OCI-LY7 (cell line): ENCODE measurements at regions of chr17 and their contacts with region 1.

Region 1: DNA sequence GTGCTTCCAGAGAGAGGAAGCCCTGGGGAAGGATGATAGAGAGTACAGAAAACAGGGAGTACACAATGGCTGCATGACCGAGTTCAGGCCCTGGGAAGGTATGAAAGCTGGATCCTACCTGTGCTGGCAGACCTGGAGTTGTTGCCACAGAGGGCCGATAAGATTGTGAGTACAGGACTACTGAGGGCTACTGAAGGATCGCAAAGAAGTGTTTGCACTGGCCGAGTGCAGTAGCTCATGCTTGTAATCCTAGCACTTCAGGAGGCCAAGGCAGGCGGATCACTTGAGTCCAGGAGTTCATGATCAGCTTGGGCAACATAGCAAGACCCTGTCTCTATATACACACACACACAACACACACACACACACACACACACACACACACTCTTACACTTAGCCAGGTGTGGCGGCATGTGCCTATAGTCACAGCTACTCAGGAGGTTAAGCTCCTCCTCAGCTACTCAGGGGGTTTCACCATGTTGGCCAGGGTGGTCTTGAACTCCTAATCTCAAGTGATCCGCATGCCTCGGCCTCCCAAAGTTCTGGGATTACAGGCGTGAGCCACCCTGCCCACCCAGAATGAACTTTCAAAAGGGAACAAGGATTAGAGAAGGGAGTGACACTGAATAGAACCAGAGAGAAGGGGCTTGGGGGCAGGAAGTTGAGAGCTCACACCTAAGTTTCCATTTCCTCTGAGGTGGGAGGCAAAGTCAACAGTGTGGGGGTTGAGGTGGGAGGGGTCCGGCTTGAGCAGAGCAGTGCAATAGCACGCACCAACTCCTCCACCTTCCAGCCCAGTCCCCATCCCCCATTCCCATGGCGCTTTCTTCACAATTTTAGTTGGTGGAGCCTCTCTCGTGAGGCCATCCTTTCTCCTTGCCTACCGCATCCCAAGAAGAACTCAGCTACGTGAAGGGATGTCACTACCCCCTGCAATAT is 7.5 kb downstream of the SCIMP start:
- DNase-seq: peak; percentile 71
- H3K4me3 ChIP-seq: no peak overlapping the region
- H3K27ac ChIP-seq: peak overlapping the region; percentile 56
- H3K4me1 ChIP-seq: peaks cover 89% of the 10 kb centered on the region
- CTCF ChIP-seq: no peak

Region 2: DNA sequence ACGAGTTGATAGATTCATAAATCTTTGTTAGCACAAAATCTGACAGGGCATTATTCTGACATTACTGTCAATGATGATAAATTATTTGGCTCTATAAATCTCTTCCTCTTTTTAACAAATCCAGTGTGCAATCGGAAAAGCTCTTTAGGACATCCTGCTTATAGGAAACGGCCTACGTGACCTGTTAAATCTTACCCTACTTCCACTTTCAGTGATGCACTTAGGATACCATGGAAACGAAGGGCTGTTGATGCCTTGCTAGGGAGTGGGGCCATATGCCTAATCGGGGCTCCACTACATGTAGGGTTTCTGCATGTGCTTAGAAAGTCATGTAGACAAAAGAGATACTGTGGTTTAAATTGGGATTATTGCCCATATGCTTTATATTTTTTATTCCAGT is 62.8 kb before region 1 on chr17:
- CTCF ChIA-PET with region 1: no interaction called
- POLR2A ChIA-PET with region 1: no interaction called
- intact Hi-C with region 1: no loop called
- DNase-seq: no peak
- H3K4me3 ChIP-seq: no peak overlapping the region
- H3K27ac ChIP-seq: no peak overlapping the region
- H3K4me1 ChIP-seq: peaks cover 6% of the 10 kb centered on the region
- CTCF ChIP-seq: no peak

Region 3: DNA sequence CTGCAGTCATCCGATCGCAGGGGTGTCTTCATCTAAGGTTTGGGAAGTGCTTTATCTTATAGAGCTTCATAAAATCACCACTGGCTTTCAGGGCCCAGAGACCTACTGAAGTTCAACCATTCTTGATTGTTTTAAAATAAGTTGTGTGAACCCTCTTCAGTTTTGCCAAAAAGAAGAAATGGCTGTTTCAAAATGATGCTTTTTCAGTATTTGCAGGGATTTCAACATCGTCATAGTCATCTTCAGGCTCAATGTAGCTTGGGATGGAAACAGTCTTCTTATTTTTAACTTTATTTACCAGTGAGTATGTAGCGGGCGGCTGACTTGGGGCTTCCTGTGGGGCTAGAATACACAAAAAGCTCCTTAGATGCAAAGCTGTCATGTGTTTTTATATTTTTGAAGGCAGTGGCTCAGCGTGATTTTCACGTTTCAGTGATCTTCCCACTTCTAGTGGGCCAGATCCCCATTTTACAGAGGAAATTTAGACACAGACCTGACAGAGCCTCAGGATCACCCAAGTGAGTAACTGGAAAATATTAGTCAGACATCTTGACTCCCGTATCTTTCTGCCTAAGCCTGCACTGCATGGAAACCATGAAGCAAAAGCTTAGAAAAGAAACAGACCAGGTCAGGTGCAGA is 16.5 kb before region 1 on chr17:
- CTCF ChIA-PET with region 1: interaction called, 3 read pairs
- POLR2A ChIA-PET with region 1: interaction called, 36 read pairs
- intact Hi-C with region 1: no loop called
- DNase-seq: peak; percentile 72
- H3K4me3 ChIP-seq: peak overlapping the region; percentile 40
- H3K27ac ChIP-seq: peak overlapping the region; percentile 85
- H3K4me1 ChIP-seq: peaks cover 47% of the 10 kb centered on the region
- CTCF ChIP-seq: no peak